ENCODE measurements at regions of chr11 and their contacts with region 1.

Region 1: DNA sequence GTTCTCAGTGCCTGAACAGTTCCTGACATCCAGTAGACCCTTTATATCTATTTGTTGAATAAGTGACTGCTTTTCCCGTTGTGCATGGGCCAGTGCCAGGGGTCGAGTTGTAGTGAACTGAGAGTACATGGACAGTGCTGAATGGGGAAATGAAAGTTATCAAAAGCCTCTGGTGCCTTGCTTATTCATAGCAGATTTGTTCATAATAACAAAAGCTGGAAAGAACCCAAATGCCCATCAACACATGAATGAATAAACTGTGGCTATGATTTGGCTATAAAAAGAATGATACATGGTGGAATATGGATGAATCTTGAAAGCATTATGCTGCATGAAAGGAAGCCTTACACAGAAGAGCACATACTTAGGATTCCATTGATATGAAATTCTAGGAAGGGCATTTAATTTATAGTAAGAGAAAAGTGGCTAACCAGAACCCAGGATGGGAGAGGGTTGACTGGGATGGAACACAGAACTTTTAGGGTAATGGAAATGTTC is 42.6 kb downstream of the PACS1 start:
- DNase-seq: no peak
- ATAC-seq: no peak
- H3K4me3 Mint-ChIP-seq: no peak overlapping the region
- H3K27ac Mint-ChIP-seq: peak overlapping the region; percentile 91
- H3K4me1 Mint-ChIP-seq: peaks cover 96% of the 10 kb centered on the region
- H3K27me3 Mint-ChIP-seq: no peaks in the 10 kb centered on the region

Region 2: GRCh38 chr11:66126808-66127555 is 14.3 kb after region 1 on chr11:
- CTCF ChIA-PET with region 1: interaction called, 9 read pairs
- POLR2A ChIA-PET with region 1: interaction called, 10 read pairs
- intact Hi-C with region 1: loop called in 1 of 2 experiments (anchors 1 kb)
- DNase-seq: peak; percentile 85
- ATAC-seq: peak; percentile 87
- H3K4me3 Mint-ChIP-seq: peak overlapping the region; percentile 71
- H3K27ac Mint-ChIP-seq: peak overlapping the region; percentile 99
- H3K4me1 Mint-ChIP-seq: peaks cover 77% of the 10 kb centered on the region
- H3K27me3 Mint-ChIP-seq: no peaks in the 10 kb centered on the region

Region 3: DNA sequence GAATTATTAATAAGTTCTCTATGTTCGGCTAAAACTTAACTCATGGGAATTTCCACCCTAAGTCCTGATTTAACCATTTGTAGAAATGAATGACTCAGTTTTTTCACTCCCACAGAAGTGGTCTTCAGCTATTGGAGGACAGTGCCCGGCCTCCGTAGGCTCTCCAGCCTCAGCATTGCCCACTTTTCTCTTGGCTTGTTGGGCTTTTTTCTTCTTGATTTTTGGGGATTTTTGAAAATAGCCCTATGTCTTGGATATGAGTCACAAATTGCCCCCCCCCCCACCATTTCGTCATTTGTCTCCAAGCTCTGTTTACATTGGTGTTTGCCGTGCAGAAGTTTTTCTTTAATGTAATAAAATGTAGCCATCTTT is 24.1 kb after region 1 on chr11:
- CTCF ChIA-PET with region 1: interaction called, 14 read pairs
- POLR2A ChIA-PET with region 1: no interaction called
- intact Hi-C with region 1: no loop called
- DNase-seq: peak; percentile 52
- ATAC-seq: no peak
- H3K4me3 Mint-ChIP-seq: no peak overlapping the region
- H3K27ac Mint-ChIP-seq: peak overlapping the region; percentile 55
- H3K4me1 Mint-ChIP-seq: peaks cover 59% of the 10 kb centered on the region
- H3K27me3 Mint-ChIP-seq: no peaks in the 10 kb centered on the region